ENCODE measurements at regions of chr6 and their contacts with region 1.

Region 1: DNA sequence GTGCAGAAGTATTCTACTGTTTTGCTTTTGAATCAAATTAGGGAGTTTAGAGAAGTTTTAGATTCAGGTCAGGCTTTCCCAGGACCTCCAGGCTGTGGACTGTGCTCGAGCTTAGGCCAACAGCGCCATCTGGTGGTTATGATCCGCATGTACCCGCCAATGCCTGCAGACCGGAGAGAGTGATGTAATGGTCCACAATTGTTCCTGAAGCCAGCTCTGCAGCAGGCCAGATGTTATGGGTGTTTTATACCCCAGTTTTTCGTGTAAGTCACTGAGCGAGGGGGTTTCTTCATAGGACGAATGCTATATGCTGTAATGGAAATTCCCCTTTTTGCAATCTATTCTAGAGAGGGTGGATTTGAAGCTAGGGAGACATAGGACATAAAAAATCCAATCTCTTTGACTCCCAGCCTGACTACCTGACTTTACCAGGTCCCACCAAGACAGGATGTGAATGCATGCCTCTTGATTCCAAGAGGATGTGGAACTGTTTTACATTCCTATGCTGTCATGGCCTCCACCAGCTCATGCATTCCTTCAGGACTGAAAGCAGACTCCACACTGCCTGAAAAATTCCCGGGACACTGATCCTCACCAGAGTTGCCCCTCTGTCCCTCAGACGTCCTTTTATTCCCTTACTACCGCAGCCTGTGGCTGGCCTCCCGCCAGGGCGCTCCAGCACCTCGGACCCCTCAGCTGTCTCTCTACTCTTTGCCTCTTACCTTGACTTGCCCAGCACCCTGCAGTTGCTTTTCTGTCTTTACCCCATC is 41.2 kb upstream of the LY86 start:
- DNase-seq: peak; percentile 70
- ATAC-seq: peak; percentile 97
- H3K4me3 ChIP-seq: peak overlapping the region in 2 of 3 experiments; percentile 5 to 59; a peak in 1 of 6 replicates
- H3K27ac ChIP-seq: no peak overlapping the region
- H3K4me1 ChIP-seq: no peaks in the 10 kb centered on the region
- H3K27me3 ChIP-seq: peaks cover 8 to 19% of the 10 kb centered on the region in 2 experiments; a peak in 4 of 5 replicates
- CTCF ChIP-seq: peak; percentile 97
- EP300 ChIP-seq: no peak
- POLR2A ChIP-seq: no peak
- RAD21 ChIP-seq: peak; percentile 82

Region 2: GRCh38 chr6:5471044-5471443 is 1076.3 kb before region 1 on chr6:
- CTCF ChIA-PET with region 1: interaction called, 3 read pairs
- POLR2A ChIA-PET with region 1: no interaction called
- in situ Hi-C with region 1: no loop called
- intact Hi-C with region 1: loop called (anchors 2 kb)
- DNase-seq: peak; percentile 54
- ATAC-seq: peak; percentile 98
- H3K4me3 ChIP-seq: no peak overlapping the region
- H3K27ac ChIP-seq: no peak overlapping the region
- H3K4me1 ChIP-seq: no peaks in the 10 kb centered on the region
- H3K27me3 ChIP-seq: no peaks in the 10 kb centered on the region
- CTCF ChIP-seq: peak; percentile 86
- EP300 ChIP-seq: no peak
- POLR2A ChIP-seq: no peak
- RAD21 ChIP-seq: peak; percentile 81

Region 3: DNA sequence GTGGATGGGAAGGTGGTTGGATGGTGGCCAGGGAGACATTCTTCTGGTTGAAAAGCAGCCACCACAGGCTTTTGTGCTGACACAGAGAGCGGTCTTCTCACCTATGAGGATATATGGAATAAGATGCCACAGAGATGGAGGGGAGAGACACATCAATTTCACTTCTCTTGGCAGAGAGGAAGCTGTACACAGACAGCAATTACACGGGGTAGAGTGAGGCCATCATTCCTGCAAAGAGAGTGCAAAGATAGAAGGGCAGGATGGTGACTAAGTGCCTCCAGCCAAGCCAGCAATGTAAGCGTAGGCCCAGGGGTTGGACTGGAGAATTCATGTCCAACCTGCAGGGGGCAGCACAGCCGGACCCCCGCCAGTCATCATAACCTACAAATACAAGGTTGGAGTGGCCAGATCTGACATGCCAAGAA is 596.9 kb before region 1 on chr6:
- CTCF ChIA-PET with region 1: no interaction called
- POLR2A ChIA-PET with region 1: no interaction called
- in situ Hi-C with region 1: no loop called
- intact Hi-C with region 1: loop called (anchors 5 kb)
- DNase-seq: no peak
- ATAC-seq: peak; percentile 89
- H3K4me3 ChIP-seq: no peak overlapping the region
- H3K27ac ChIP-seq: no peak overlapping the region
- H3K4me1 ChIP-seq: peaks cover 7% of the 10 kb centered on the region
- H3K27me3 ChIP-seq: peaks cover 0 to 6% of the 10 kb centered on the region in 2 experiments; a peak in 1 of 5 replicates
- CTCF ChIP-seq: peak; percentile 71
- EP300 ChIP-seq: no peak
- POLR2A ChIP-seq: no peak
- RAD21 ChIP-seq: no peak

Region 4: GRCh38 chr6:6057424-6058053 is 489.8 kb before region 1 on chr6:
- CTCF ChIA-PET with region 1: interaction called, 26 read pairs
- POLR2A ChIA-PET with region 1: no interaction called
- in situ Hi-C with region 1: loop called (anchors 5 kb)
- intact Hi-C with region 1: loop called (anchors 1 kb)
- DNase-seq: peak; percentile 57
- ATAC-seq: peak; percentile 85
- H3K4me3 ChIP-seq: no peak overlapping the region
- H3K27ac ChIP-seq: no peak overlapping the region
- H3K4me1 ChIP-seq: no peaks in the 10 kb centered on the region
- H3K27me3 ChIP-seq: peaks cover 0 to 28% of the 10 kb centered on the region in 2 experiments; a peak in 2 of 5 replicates
- CTCF ChIP-seq: peak; percentile 64
- EP300 ChIP-seq: no peak
- POLR2A ChIP-seq: no peak
- RAD21 ChIP-seq: no peak

Region 5: GRCh38 chr6:6131492-6132109 is 415.7 kb before region 1 on chr6:
- CTCF ChIA-PET with region 1: no interaction called
- POLR2A ChIA-PET with region 1: no interaction called
- in situ Hi-C with region 1: no loop called
- intact Hi-C with region 1: loop called (anchors 10 kb)
- DNase-seq: peak; percentile 53
- ATAC-seq: peak; percentile 64; the same call in 2 of the 3 replicates
- H3K4me3 ChIP-seq: no peak overlapping the region
- H3K27ac ChIP-seq: no peak overlapping the region
- H3K4me1 ChIP-seq: no peaks in the 10 kb centered on the region
- H3K27me3 ChIP-seq: no peaks in the 10 kb centered on the region; a peak in 1 of 5 replicates
- CTCF ChIP-seq: peak; percentile 55
- EP300 ChIP-seq: no peak
- POLR2A ChIP-seq: no peak
- RAD21 ChIP-seq: no peak

Region 6: DNA sequence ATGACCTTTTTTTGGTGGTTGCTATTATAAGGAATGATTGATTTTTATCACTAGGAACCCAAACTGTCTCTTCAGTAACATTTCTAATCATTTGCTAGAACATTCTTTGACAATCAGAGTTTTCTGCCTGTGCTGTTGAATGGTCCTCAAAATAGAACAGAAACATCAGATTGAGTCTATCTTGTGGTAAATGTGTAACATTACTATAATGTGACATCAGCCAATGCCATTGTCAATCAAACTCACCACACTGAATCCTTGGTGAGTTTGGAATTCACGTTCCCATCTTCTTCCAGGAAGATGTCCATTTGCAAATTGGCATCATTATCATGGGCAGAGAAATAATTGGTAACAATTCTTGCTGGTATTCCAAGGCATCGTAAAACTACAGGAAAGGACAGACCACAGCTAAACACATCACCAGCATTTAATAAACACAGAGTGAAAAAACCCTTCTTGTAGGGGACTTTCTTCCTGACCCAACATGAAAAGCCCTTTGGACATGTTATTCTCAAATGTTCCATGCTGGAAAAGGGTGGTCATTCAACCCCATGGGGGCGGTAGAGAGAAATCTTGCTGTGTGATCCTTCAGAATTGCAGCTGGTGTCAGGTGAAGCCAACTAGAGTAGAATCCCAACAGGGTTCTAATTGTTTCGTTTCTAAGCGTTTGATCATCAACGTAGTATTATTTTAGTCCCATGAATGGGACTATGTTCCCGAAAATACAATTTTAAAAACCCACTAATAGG is 325.3 kb before region 1 on chr6:
- CTCF ChIA-PET with region 1: interaction called, 4 read pairs
- POLR2A ChIA-PET with region 1: no interaction called
- in situ Hi-C with region 1: loop called (anchors 5 kb)
- intact Hi-C with region 1: loop called (anchors 5 kb)
- DNase-seq: peak; percentile 41
- ATAC-seq: peak; percentile 64
- H3K4me3 ChIP-seq: no peak overlapping the region
- H3K27ac ChIP-seq: no peak overlapping the region
- H3K4me1 ChIP-seq: no peaks in the 10 kb centered on the region
- H3K27me3 ChIP-seq: no peaks in the 10 kb centered on the region
- CTCF ChIP-seq: peak; percentile 42
- EP300 ChIP-seq: no peak
- POLR2A ChIP-seq: no peak
- RAD21 ChIP-seq: no peak

Region 7: DNA sequence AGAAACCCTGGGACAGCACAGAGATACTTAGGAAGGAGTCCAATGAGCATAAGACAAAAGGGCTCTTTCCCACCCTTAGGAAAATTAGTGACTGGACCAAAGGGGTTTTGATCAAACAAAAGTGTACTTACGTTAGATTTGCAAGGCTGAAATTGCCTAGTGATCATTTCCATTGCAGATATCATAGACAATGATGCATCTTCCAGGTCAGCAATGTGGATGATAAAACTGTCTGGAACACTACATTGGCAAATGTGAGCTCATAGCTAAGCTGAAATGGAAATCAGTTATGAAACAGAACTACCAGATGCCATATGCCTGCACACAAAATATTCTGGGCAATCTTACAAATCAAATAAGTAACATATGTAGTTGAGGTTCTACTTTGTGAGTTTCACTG is 75.2 kb after region 1 on chr6:
- CTCF ChIA-PET with region 1: no interaction called
- POLR2A ChIA-PET with region 1: no interaction called
- in situ Hi-C with region 1: no loop called
- intact Hi-C with region 1: no loop called
- DNase-seq: no peak
- ATAC-seq: no peak
- H3K4me3 ChIP-seq: no peak overlapping the region
- H3K27ac ChIP-seq: no peak overlapping the region
- H3K4me1 ChIP-seq: no peaks in the 10 kb centered on the region
- H3K27me3 ChIP-seq: peaks cover 1 to 23% of the 10 kb centered on the region in 2 experiments; a peak in 2 of 5 replicates
- CTCF ChIP-seq: no peak
- EP300 ChIP-seq: no peak
- POLR2A ChIP-seq: no peak
- RAD21 ChIP-seq: no peak